CD8-positive, alpha-beta T cell (primary cell): ENCODE measurements at regions of chr3 and their contacts with region 1.

Region 1: GRCh38 chr3:111227216-111227615 is 155.6 kb downstream of the NECTIN3 start:
- DNase-seq: no peak
- ATAC-seq: no peak
- H3K4me3 ChIP-seq: no peak overlapping the region
- H3K4me3 Mint-ChIP-seq: no peak overlapping the region
- H3K27ac ChIP-seq: no peak overlapping the region
- H3K27ac Mint-ChIP-seq: no peak overlapping the region
- H3K4me1 ChIP-seq: no peaks in the 10 kb centered on the region
- H3K4me1 Mint-ChIP-seq: no peaks in the 10 kb centered on the region
- H3K27me3 ChIP-seq: no peaks in the 10 kb centered on the region
- H3K27me3 Mint-ChIP-seq: no peaks in the 10 kb centered on the region
- CTCF ChIP-seq: no peak

Region 2: GRCh38 chr3:111260878-111261277 is 33.7 kb after region 1 on chr3:
- CTCF ChIA-PET with region 1: no interaction called
- POLR2A ChIA-PET with region 1: no interaction called
- intact Hi-C with region 1: loop called in 1 of 2 experiments (anchors 5 kb)
- DNase-seq: peak in 2 of 9 experiments; percentile 12 to 33
- ATAC-seq: no peak
- H3K4me3 ChIP-seq: no peak overlapping the region
- H3K4me3 Mint-ChIP-seq: no peak overlapping the region
- H3K27ac ChIP-seq: no peak overlapping the region
- H3K27ac Mint-ChIP-seq: no peak overlapping the region
- H3K4me1 ChIP-seq: peaks cover 5% of the 10 kb centered on the region
- H3K4me1 Mint-ChIP-seq: peaks cover 4% of the 10 kb centered on the region
- H3K27me3 ChIP-seq: no peaks in the 10 kb centered on the region
- H3K27me3 Mint-ChIP-seq: no peaks in the 10 kb centered on the region
- CTCF ChIP-seq: no peak